ENCODE measurements at regions of chr10 and their contacts with region 1.

Region 1: DNA sequence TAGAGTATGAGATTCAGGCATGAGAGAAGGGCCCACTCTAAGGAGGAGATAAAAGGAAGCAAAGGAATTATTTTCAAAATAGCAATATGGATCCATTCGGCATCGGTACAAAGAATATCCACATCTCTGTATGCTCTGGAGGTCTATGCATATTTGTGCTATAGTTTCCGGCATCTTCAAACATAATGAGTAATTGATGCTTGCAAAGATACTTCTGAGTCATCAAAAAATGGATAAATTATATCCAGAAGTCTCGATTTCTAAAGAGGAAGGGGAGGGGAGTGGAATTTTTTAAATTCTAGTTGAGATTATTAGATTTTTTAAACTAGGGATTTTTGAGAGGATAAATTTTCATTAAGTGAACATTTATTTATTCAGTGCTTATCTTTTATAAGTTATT is 72.9 kb upstream of the KIAA1217 start:
- DNase-seq: no peak
- H3K4me3 ChIP-seq: no peak overlapping the region
- H3K4me3 Mint-ChIP-seq: no peak overlapping the region
- H3K27ac Mint-ChIP-seq: no peak overlapping the region
- H3K4me1 ChIP-seq: no peaks in the 10 kb centered on the region
- H3K4me1 Mint-ChIP-seq: no peaks in the 10 kb centered on the region
- H3K27me3 ChIP-seq: peaks cover 2% of the 10 kb centered on the region
- H3K27me3 Mint-ChIP-seq: peaks cover 18% of the 10 kb centered on the region
- CTCF ChIP-seq: no peak

Region 2: GRCh38 chr10:23793577-23793976 is 342.5 kb before region 1 on chr10:
- CTCF ChIA-PET with region 1: no interaction called
- POLR2A ChIA-PET with region 1: no interaction called
- intact Hi-C with region 1: no loop called
- DNase-seq: no peak
- H3K4me3 ChIP-seq: no peak overlapping the region
- H3K4me3 Mint-ChIP-seq: no peak overlapping the region
- H3K27ac Mint-ChIP-seq: no peak overlapping the region
- H3K4me1 ChIP-seq: peaks cover 11% of the 10 kb centered on the region
- H3K4me1 Mint-ChIP-seq: peaks cover 11% of the 10 kb centered on the region
- H3K27me3 ChIP-seq: no peaks in the 10 kb centered on the region
- H3K27me3 Mint-ChIP-seq: no peaks in the 10 kb centered on the region
- CTCF ChIP-seq: no peak

Region 3: GRCh38 chr10:24153031-24153430 is 17.0 kb after region 1 on chr10:
- CTCF ChIA-PET with region 1: no interaction called
- POLR2A ChIA-PET with region 1: no interaction called
- intact Hi-C with region 1: loop called (anchors 2 kb)
- DNase-seq: no peak
- H3K4me3 ChIP-seq: no peak overlapping the region
- H3K4me3 Mint-ChIP-seq: no peak overlapping the region
- H3K27ac Mint-ChIP-seq: no peak overlapping the region
- H3K4me1 ChIP-seq: no peaks in the 10 kb centered on the region
- H3K4me1 Mint-ChIP-seq: no peaks in the 10 kb centered on the region
- H3K27me3 ChIP-seq: no peaks in the 10 kb centered on the region
- H3K27me3 Mint-ChIP-seq: peaks cover 8% of the 10 kb centered on the region
- CTCF ChIP-seq: no peak

Measured in Caco-2 (cell line).